Activated CD8-positive, alpha-beta T cell treated with anti-CD3 and anti-CD28 coated beads for 36 hours (primary cell): ENCODE measurements at regions of chr20 and their contacts with region 1.

Region 1: DNA sequence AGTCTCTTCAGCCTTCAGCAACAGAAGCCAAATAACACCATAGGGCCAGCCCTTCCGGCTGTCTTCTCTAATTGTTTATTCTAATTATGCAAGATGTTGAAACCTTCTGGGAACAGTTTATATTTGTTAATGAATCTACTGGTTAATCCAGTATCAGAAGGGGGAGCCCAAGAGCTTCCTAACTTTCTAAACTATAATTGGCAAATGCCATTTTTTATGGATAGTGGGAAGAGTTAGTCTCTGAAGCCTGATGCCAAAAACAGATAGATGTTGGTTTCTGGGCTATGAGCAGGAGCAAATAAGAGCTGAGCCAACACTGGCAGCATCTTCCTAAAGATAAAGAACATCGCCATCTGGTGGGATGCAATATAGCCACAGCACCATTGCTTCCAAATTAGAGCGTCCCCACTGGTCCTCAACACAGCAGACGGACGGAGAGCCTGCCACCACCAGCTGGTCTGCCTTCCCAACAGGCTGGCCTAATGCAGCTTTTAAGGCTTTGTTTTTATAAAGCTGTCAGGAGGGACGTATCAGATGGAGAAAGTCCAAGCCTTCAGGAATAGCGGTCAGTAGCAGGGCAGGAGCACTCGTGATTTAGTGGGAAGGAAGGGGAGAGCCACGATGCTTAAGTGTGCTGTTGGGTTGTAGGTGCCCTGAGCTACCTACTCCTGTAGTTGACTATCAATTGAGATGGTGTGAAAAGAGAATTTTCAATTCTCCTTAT is 118.8 kb downstream of the RALGAPA2 start:
- DNase-seq: peak; percentile 38
- ATAC-seq: no peak
- H3K4me3 Mint-ChIP-seq: no peak overlapping the region
- H3K27ac Mint-ChIP-seq: no peak overlapping the region
- H3K4me1 Mint-ChIP-seq: no peaks in the 10 kb centered on the region
- H3K27me3 Mint-ChIP-seq: no peaks in the 10 kb centered on the region
- CTCF ChIP-seq: peak; percentile 74

Region 2: DNA sequence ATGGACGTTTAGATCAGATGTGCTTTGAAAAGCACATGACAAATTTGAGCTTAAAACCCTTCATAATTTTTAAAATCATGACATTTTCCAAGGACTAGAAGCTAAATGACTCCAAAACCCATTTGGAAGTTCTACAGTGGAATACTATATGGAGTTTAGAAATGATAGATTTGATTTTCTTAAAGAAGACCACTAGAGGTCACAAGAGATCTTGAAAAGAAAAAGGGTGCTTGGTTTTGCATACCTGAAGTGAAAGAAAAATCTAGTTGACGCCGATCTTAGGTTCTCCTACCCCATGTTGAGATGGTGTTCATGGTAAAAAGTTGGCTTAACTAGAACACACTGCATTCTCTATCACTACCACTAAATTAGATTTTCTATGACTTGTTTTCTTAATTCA is 509.8 kb before region 1 on chr20:
- CTCF ChIA-PET with region 1: interaction called, 17 read pairs
- POLR2A ChIA-PET with region 1: interaction called, 4 read pairs
- intact Hi-C with region 1: loop called (anchors 10 kb)
- DNase-seq: no peak
- ATAC-seq: peak; percentile 69
- H3K4me3 Mint-ChIP-seq: peak overlapping the region; percentile 59
- H3K27ac Mint-ChIP-seq: peak overlapping the region; percentile 20
- H3K4me1 Mint-ChIP-seq: peaks cover 7% of the 10 kb centered on the region
- H3K27me3 Mint-ChIP-seq: peaks cover 6% of the 10 kb centered on the region
- CTCF ChIP-seq: peak; percentile 72

Region 3: GRCh38 chr20:20480689-20481088 is 112.9 kb before region 1 on chr20:
- CTCF ChIA-PET with region 1: no interaction called
- POLR2A ChIA-PET with region 1: no interaction called
- intact Hi-C with region 1: no loop called
- DNase-seq: peak; percentile 12
- ATAC-seq: peak; percentile 74
- H3K4me3 Mint-ChIP-seq: no peak overlapping the region
- H3K27ac Mint-ChIP-seq: peak overlapping the region; percentile 77
- H3K4me1 Mint-ChIP-seq: peaks cover 27% of the 10 kb centered on the region
- H3K27me3 Mint-ChIP-seq: no peaks in the 10 kb centered on the region
- CTCF ChIP-seq: no peak

Region 4: GRCh38 chr20:20580139-20580538 is 13.5 kb before region 1 on chr20:
- CTCF ChIA-PET with region 1: interaction called, 21 read pairs
- POLR2A ChIA-PET with region 1: no interaction called
- intact Hi-C with region 1: no loop called
- DNase-seq: no peak
- ATAC-seq: no peak
- H3K4me3 Mint-ChIP-seq: no peak overlapping the region
- H3K27ac Mint-ChIP-seq: no peak overlapping the region
- H3K4me1 Mint-ChIP-seq: peaks cover 4% of the 10 kb centered on the region
- H3K27me3 Mint-ChIP-seq: no peaks in the 10 kb centered on the region
- CTCF ChIP-seq: no peak